Caco-2 (cell line): ENCODE measurements at regions of chr15 and their contacts with region 1.

Region 1: GRCh38 chr15:81265944-81266775 is 57.8 kb downstream of the STARD5 start:
- DNase-seq: peak; percentile 71 to 73
- H3K4me3 ChIP-seq: no peak overlapping the region
- H3K4me3 Mint-ChIP-seq: no peak overlapping the region
- H3K27ac Mint-ChIP-seq: no peak overlapping the region
- H3K4me1 ChIP-seq: peaks cover 5% of the 10 kb centered on the region; the same call in 1 of the 2 replicates
- H3K4me1 Mint-ChIP-seq: no peaks in the 10 kb centered on the region
- H3K27me3 ChIP-seq: no peaks in the 10 kb centered on the region; the same call in 1 of the 2 replicates
- H3K27me3 Mint-ChIP-seq: peaks cover 12% of the 10 kb centered on the region
- CTCF ChIP-seq: peak; percentile 78 to 86

Region 2: GRCh38 chr15:80970018-80970658 is 296.0 kb before region 1 on chr15:
- CTCF ChIA-PET with region 1: interaction called, 4 read pairs
- POLR2A ChIA-PET with region 1: no interaction called
- intact Hi-C with region 1: loop called (anchors 10 kb)
- DNase-seq: peak in 1 of 2 experiments; percentile 77
- H3K4me3 ChIP-seq: no peak overlapping the region
- H3K4me3 Mint-ChIP-seq: no peak overlapping the region
- H3K27ac Mint-ChIP-seq: no peak overlapping the region
- H3K4me1 ChIP-seq: peaks cover 21% of the 10 kb centered on the region
- H3K4me1 Mint-ChIP-seq: peaks cover 14% of the 10 kb centered on the region
- H3K27me3 ChIP-seq: no peaks in the 10 kb centered on the region
- H3K27me3 Mint-ChIP-seq: no peaks in the 10 kb centered on the region
- CTCF ChIP-seq: peak; percentile 59 to 85

Region 3: GRCh38 chr15:81155375-81156218 is 110.6 kb before region 1 on chr15:
- CTCF ChIA-PET with region 1: interaction called, 59 read pairs
- POLR2A ChIA-PET with region 1: no interaction called
- intact Hi-C with region 1: loop called (anchors 1 kb)
- DNase-seq: peak in 1 of 2 experiments; percentile 27
- H3K4me3 ChIP-seq: no peak overlapping the region
- H3K4me3 Mint-ChIP-seq: no peak overlapping the region
- H3K27ac Mint-ChIP-seq: no peak overlapping the region
- H3K4me1 ChIP-seq: no peaks in the 10 kb centered on the region
- H3K4me1 Mint-ChIP-seq: no peaks in the 10 kb centered on the region
- H3K27me3 ChIP-seq: no peaks in the 10 kb centered on the region
- H3K27me3 Mint-ChIP-seq: peaks cover 12% of the 10 kb centered on the region
- CTCF ChIP-seq: peak; percentile 40 to 54